ENCODE measurements at regions of chr2 and their contacts with region 1.

Region 1: GRCh38 chr2:133844214-133844892 is 276.1 kb upstream of the NCKAP5 start:
- DNase-seq: peak; percentile 84
- H3K4me3 Mint-ChIP-seq: no peak overlapping the region
- H3K27ac Mint-ChIP-seq: no peak overlapping the region
- H3K4me1 Mint-ChIP-seq: peaks cover 15% of the 10 kb centered on the region
- H3K27me3 Mint-ChIP-seq: no peaks in the 10 kb centered on the region
- CTCF ChIP-seq: peak; percentile 90

Region 2: DNA sequence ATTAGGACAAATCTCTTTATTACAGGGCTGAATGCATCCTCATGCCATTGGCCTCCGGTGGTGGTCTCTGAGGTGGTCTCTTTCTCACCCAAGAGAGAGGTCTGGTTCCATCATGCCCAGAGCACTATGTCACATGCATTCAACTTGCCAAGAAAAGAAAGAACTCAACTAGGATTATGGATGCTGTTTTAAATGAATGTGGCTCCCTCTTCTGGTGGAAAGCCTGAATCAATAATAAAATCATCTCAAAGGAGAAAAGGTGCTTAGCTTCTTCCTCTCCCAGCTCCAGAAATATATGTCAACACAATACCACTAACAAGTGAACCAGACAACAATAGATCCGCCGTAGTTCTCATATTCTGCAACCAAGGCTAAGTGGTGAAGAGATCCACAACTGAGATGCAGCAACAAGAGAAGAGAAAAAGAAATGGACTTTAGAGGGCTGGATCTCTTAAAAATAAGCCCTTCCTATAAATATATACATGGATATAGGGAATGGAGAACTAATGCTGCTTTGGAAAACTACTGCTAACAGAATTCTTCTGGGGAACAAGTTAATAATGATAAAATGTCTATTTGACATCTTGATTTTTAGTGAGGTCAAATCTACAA is 672.9 kb before region 1 on chr2:
- CTCF ChIA-PET with region 1: interaction called, 10 read pairs
- POLR2A ChIA-PET with region 1: no interaction called
- intact Hi-C with region 1: loop called (anchors 5 kb)
- DNase-seq: peak; percentile 62
- H3K4me3 Mint-ChIP-seq: no peak overlapping the region
- H3K27ac Mint-ChIP-seq: no peak overlapping the region
- H3K4me1 Mint-ChIP-seq: no peaks in the 10 kb centered on the region
- H3K27me3 Mint-ChIP-seq: peaks cover 10% of the 10 kb centered on the region
- CTCF ChIP-seq: peak; percentile 57

Region 3: DNA sequence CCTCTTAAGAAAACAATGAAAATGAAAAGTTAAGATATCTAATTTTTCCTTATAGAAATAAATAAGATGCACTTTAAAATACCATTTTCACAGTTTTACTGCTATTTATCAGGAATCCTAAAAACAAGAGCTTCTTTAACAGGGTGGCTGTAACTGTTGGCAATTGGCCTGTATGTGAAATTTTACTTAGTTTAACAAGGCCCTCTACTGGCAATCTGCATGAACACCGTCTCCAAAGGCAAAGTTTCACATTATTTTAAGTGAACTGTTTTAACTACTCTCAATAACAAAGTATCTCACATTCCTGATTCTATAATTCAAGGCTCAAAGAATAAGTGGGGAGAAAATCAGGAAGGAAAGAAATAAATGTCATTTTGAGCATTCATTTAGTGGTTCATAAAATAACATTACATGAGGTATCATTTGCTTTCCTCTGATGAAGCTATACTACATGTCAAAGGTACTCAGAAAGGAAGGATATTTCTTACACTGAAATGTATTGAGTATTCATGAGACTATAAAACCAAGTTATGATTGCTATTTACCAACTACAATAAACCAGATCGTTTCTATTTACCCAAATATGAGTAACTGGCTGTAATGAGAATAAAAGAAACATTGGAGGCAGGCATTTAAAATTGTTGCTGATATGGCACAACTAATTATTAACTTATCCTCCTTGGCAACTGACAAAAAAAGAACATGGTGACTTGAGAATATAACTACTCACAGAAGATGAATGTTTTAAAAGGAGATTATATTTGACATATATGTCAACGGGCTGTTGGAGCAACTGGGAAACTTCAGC is 283.1 kb before region 1 on chr2:
- CTCF ChIA-PET with region 1: interaction called, 9 read pairs
- POLR2A ChIA-PET with region 1: no interaction called
- intact Hi-C with region 1: loop called (anchors 2 kb)
- DNase-seq: peak; percentile 14
- H3K4me3 Mint-ChIP-seq: no peak overlapping the region
- H3K27ac Mint-ChIP-seq: no peak overlapping the region
- H3K4me1 Mint-ChIP-seq: no peaks in the 10 kb centered on the region
- H3K27me3 Mint-ChIP-seq: no peaks in the 10 kb centered on the region
- CTCF ChIP-seq: peak; percentile 59

Region 4: DNA sequence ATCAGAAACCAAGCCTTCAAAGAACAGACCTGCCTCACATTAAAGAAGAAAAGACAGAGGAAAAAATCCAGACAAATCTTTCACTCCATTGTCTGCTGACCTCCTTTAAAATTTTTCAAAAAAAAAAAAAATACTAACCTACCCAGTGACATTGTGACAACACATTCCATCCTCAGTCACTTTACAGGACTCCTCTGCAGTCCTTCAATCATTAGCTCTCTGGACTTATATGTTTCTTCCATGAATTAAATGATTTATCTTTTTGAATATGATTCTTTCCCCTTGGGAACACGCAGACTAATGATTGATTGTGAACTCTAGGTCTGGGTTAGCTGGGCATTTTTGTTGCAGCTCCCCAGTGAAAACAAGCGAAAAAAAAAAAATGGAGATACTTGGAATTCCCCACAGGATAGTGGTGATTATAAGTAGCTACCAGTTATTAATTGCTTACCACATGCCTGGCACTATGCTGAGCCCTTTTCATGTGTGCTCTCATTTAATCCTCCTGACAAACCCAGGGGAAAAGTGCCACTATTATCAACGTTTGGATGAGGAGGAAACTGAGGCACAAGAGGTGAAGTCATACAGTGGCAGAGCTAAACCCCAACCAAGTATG is 14.8 kb before region 1 on chr2:
- CTCF ChIA-PET with region 1: interaction called, 51 read pairs
- POLR2A ChIA-PET with region 1: no interaction called
- intact Hi-C with region 1: no loop called
- DNase-seq: no peak
- H3K4me3 Mint-ChIP-seq: no peak overlapping the region
- H3K27ac Mint-ChIP-seq: no peak overlapping the region
- H3K4me1 Mint-ChIP-seq: no peaks in the 10 kb centered on the region
- H3K27me3 Mint-ChIP-seq: peaks cover 7% of the 10 kb centered on the region
- CTCF ChIP-seq: no peak

Region 5: GRCh38 chr2:133862400-133862977 is 18.1 kb after region 1 on chr2:
- CTCF ChIA-PET with region 1: interaction called, 21 read pairs
- POLR2A ChIA-PET with region 1: no interaction called
- intact Hi-C with region 1: no loop called
- DNase-seq: no peak
- H3K4me3 Mint-ChIP-seq: no peak overlapping the region
- H3K27ac Mint-ChIP-seq: no peak overlapping the region
- H3K4me1 Mint-ChIP-seq: no peaks in the 10 kb centered on the region
- H3K27me3 Mint-ChIP-seq: peaks cover 11% of the 10 kb centered on the region
- CTCF ChIP-seq: no peak

Region 6: DNA sequence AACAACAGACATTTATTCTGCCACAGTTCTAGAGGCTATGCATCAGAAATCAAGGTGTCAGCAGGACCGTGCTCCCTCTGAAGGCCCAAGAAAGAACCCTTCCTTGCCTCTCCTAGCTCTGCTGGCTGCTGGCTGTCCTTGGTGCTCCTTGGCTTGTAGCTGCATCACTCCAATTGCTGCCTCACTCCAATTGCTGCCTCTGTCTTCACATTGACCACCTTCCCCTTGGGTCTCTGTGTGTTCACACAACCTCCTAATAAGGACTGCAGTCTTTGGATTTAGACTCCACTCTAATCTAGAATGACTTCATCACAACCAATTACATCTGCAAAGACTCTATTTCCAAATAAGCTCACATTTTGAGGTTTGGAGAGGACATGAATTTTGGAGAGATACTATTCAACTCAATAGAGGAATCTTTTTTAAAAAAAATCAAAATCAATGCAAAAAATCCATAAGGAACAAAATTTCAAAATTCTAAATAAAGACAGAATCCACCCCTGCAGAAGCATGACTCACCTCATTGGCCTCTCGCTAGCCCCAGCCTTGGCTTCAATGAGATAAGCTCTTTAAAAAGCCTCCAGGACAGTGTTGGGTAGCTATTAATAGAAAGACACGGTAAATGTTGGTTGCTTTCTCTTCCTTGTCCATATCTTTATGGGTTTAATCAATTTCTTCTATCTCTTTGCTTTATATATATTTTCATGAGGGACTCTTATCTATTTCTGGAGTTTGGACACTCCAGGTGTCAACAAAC is 141.9 kb after region 1 on chr2:
- CTCF ChIA-PET with region 1: no interaction called
- POLR2A ChIA-PET with region 1: no interaction called
- intact Hi-C with region 1: no loop called
- DNase-seq: peak; percentile 42
- H3K4me3 Mint-ChIP-seq: no peak overlapping the region
- H3K27ac Mint-ChIP-seq: no peak overlapping the region
- H3K4me1 Mint-ChIP-seq: peaks cover 14% of the 10 kb centered on the region
- H3K27me3 Mint-ChIP-seq: no peaks in the 10 kb centered on the region
- CTCF ChIP-seq: no peak